Activated CD4-positive, alpha-beta memory T cell treated with anti-CD3 and anti-CD28 coated beads for 36 hours (primary cell): ENCODE measurements at regions of chr1 and their contacts with region 1.

Region 1: DNA sequence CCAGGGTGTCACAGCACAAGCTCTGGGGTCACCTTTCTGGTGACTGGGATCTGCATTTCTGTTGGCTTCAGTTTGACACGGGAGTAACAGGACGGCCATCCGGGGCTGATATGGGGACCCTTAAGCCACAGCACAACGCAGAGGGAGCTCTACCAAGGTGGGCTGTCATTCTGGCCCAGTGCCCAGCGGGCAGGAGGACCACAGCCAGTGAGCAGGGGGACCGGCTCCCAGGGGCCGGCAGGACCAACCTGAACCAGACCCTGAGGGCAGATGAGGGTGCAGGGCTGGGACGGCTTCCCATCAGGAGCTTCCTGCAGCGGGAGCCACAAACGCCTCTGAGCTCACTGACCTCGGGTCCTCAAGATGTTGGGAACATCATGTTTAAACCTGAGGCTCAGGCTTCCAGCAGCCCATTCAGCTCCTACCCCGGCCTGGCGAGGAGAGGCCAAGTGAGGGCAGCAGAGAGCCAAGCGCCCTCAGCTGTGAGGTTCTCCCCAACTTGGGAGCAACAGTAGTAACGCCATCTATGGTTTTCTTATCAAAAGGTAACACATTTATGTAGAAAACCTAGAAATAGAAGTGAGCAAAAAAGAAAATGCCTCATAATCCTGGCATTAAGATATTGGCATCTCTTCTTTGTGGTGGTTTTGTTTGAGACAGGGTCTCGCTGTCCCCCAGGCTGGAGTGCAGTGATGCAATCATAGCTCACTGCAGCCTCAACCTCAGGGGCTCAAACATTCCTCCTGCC is 26.8 kb downstream of the TMEM201 start:
- DNase-seq: peak; percentile 71
- H3K4me3 Mint-ChIP-seq: no peak overlapping the region
- H3K27ac Mint-ChIP-seq: no peak overlapping the region
- H3K4me1 Mint-ChIP-seq: no peaks in the 10 kb centered on the region
- H3K27me3 Mint-ChIP-seq: peaks cover 4% of the 10 kb centered on the region

Region 2: DNA sequence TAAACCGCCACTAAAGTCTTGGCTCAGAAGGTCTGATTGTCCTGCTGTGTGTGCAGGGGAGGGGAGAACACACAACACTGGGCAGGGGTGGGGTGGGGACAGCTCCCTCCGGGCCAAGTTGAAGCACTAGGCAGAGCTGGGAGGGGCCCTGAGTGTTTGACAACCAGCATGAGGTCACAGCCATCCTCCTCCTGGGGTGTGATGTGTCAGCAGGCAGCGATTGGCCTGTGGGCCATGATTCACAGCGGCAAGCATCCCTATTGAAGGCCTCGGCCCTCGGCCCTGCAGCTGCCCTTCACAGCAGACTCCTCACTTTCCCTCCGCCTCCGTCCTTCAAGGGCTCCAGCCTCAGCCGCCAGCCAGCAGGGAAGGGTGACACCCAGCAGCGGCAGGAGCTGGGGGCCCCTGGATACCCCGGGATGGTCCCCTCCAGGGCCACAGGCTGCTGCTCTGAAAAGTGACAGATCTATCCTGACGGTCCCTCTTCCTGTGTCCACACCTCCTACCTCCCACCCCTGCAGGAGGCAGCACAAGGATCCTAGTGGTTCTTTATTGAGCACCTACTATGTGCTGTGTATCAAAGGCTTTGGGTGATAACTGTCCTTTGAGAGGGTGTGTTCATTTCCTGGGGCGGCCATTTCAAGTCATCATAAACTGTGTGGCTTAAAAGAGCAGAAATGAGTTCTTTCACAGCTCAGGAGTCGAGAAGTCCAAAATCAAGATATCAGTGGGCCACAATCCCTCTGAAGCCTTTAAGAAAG is 142.3 kb before region 1 on chr1:
- CTCF ChIA-PET with region 1: no interaction called
- POLR2A ChIA-PET with region 1: no interaction called
- intact Hi-C with region 1: no loop called
- DNase-seq: peak; percentile 28
- H3K4me3 Mint-ChIP-seq: no peak overlapping the region
- H3K27ac Mint-ChIP-seq: no peak overlapping the region
- H3K4me1 Mint-ChIP-seq: peaks cover 3% of the 10 kb centered on the region
- H3K27me3 Mint-ChIP-seq: peaks cover 14% of the 10 kb centered on the region

Region 3: GRCh38 chr1:9867408-9868243 is 252.1 kb after region 1 on chr1:
- CTCF ChIA-PET with region 1: interaction called, 20 read pairs
- POLR2A ChIA-PET with region 1: no interaction called
- intact Hi-C with region 1: no loop called
- DNase-seq: peak; percentile 92
- H3K4me3 Mint-ChIP-seq: no peak overlapping the region
- H3K27ac Mint-ChIP-seq: no peak overlapping the region
- H3K4me1 Mint-ChIP-seq: no peaks in the 10 kb centered on the region
- H3K27me3 Mint-ChIP-seq: no peaks in the 10 kb centered on the region